ENCODE measurements at regions of chr13 and their contacts with region 1.

Region 1: DNA sequence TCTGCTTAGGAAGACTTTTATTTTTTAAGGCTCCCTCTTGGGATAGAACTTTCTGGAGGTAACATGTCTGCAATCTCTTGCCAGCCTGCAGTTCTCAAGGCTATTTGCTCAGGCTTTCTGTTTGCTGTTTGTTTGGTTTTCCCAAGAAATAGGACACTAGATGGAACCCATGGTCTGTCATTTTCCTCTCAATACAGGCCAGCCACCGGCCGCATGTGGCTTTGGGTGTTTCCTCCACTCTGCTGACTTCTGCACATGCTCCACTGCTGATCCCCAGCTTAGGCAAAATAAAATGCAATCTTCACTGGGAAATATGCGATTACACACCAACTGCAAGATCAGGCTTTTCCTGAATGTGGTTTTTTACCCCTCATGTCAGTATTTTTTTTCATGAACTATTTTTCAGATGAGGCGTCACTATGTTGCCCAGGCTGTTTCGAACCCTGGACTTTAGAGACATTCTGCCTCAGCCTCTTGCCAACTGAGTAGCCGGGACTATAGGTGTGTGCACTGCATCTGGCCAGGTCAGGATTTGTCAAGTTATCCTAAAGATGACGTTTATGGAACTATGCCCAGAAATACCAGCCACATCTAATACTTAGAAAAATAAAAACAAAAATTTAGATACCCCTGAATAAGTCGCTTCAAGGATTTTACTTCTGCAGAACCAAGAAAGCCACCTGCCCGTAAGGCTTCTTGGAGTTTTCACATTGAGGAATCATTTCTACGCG is 94.3 kb upstream of the PABPC3 start:
- DNase-seq: no peak
- ATAC-seq: no peak; the same call in 2 of the 3 replicates
- H3K4me3 ChIP-seq: no peak overlapping the region
- H3K27ac ChIP-seq: no peak overlapping the region
- H3K4me1 ChIP-seq: no peaks in the 10 kb centered on the region
- H3K27me3 ChIP-seq: peaks cover 0 to 8% of the 10 kb centered on the region in 2 experiments; a peak in 1 of 5 replicates
- CTCF ChIP-seq: no peak
- EP300 ChIP-seq: no peak
- POLR2A ChIP-seq: no peak
- RAD21 ChIP-seq: no peak

Region 2: GRCh38 chr13:25037057-25037813 is 35.6 kb after region 1 on chr13:
- CTCF ChIA-PET with region 1: interaction called, 3 read pairs
- POLR2A ChIA-PET with region 1: interaction called, 4 read pairs
- in situ Hi-C with region 1: no loop called
- intact Hi-C with region 1: loop called (anchors 1 kb)
- DNase-seq: peak; percentile 17 to 66 (median 30)
- ATAC-seq: peak; percentile 90
- H3K4me3 ChIP-seq: no peak overlapping the region
- H3K27ac ChIP-seq: no peak overlapping the region
- H3K4me1 ChIP-seq: no peaks in the 10 kb centered on the region
- H3K27me3 ChIP-seq: peaks cover 6 to 30% of the 10 kb centered on the region in 2 experiments; a peak in 4 of 5 replicates
- CTCF ChIP-seq: peak; percentile 65 to 75 (median 70)
- EP300 ChIP-seq: no peak
- POLR2A ChIP-seq: no peak
- RAD21 ChIP-seq: peak; percentile 27 to 72; a peak in 3 of 4 replicates

Region 3: DNA sequence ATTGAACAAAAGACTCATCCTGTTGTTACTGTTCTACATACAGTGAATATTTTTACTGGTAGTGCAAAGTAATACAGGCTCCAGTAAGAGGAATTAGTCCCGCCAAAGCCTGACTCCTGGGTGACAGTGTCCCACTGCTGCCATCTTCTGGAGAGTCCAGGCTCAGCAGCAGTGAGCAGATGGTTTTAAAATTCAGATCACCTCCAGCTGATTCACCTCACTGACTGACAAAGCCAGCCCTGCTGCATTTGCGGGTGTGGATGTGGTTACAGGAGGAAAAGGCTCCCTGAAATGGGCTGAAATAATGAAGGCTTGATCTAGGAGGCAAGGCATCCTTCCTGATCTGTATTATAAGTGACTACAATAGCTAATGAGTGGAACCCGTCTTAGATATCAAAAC is 112.6 kb after region 1 on chr13:
- CTCF ChIA-PET with region 1: interaction called, 20 read pairs
- POLR2A ChIA-PET with region 1: no interaction called
- in situ Hi-C with region 1: loop called (anchors 10 kb)
- intact Hi-C with region 1: loop called (anchors 1 kb)
- DNase-seq: peak; percentile 54 to 74 (median 59)
- ATAC-seq: peak; percentile 96
- H3K4me3 ChIP-seq: no peak overlapping the region
- H3K27ac ChIP-seq: no peak overlapping the region
- H3K4me1 ChIP-seq: no peaks in the 10 kb centered on the region
- H3K27me3 ChIP-seq: peaks cover 2 to 10% of the 10 kb centered on the region in 2 experiments; a peak in 2 of 5 replicates
- CTCF ChIP-seq: peak; percentile 83 to 89 (median 84)
- EP300 ChIP-seq: no peak
- POLR2A ChIP-seq: no peak
- RAD21 ChIP-seq: peak; percentile 55 to 76

Region 4: GRCh38 chr13:25541434-25542123 is 539.9 kb after region 1 on chr13:
- CTCF ChIA-PET with region 1: interaction called, 10 read pairs
- POLR2A ChIA-PET with region 1: no interaction called
- in situ Hi-C with region 1: no loop called
- intact Hi-C with region 1: no loop called
- DNase-seq: peak in 1 of 4 experiments; percentile 1
- ATAC-seq: no peak
- H3K4me3 ChIP-seq: no peak overlapping the region
- H3K27ac ChIP-seq: no peak overlapping the region
- H3K4me1 ChIP-seq: no peaks in the 10 kb centered on the region
- H3K27me3 ChIP-seq: no peaks in the 10 kb centered on the region
- CTCF ChIP-seq: no peak
- EP300 ChIP-seq: no peak
- POLR2A ChIP-seq: no peak
- RAD21 ChIP-seq: no peak

Region 5: DNA sequence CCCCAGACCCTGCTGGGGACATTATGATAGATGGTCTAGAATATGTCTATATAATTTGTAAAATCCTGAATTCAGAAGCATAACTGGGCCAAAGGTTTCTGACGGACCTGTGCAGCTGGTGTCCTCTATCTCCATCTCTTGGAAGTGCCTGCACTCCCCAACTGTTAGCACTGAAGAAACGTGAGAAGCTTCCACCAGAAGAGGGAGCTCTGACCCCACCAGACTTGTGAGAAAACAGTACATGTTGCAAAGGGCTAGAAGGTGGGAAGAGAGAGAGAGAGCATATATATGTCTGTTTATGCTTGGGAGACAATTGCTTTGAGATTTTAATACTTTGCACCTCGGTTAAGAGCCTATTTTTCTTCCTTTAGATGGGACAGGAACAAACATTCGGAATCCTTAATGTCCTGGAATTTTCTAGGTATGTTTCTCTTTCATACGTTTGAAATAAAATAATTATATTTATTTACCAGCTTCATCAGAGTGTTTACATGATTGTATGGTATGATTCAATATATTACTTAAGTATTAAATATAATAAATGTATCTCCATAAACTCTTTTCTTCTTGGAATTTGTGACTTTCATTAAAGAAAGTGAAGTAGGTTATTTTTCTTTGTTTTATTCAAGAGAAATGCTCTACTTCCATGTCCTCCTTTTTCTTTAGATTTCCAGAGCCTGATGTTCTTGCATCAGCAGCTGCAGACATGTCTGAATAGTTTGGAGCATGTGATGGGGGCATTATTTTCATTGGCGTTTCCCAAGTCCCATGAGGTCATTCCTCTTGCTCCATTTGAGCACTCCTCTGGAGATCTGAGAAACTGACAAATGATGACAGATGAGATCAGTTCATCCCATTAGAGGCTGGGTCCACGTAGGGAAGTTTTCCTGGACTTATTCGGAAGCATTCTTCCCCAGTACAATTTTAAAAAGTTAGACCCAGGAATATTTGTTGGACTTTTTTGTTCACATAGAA is 573.1 kb after region 1 on chr13:
- CTCF ChIA-PET with region 1: no interaction called
- POLR2A ChIA-PET with region 1: no interaction called
- in situ Hi-C with region 1: no loop called
- intact Hi-C with region 1: loop called (anchors 10 kb)
- DNase-seq: peak; percentile 47 to 79 (median 54)
- ATAC-seq: peak; percentile 95
- H3K4me3 ChIP-seq: no peak overlapping the region
- H3K27ac ChIP-seq: no peak overlapping the region
- H3K4me1 ChIP-seq: no peaks in the 10 kb centered on the region
- H3K27me3 ChIP-seq: peaks cover 0 to 22% of the 10 kb centered on the region in 2 experiments; a peak in 2 of 5 replicates
- CTCF ChIP-seq: peak; percentile 75 to 93 (median 89)
- EP300 ChIP-seq: no peak
- POLR2A ChIP-seq: no peak
- RAD21 ChIP-seq: peak; percentile 66 to 84

Region 6: GRCh38 chr13:25674371-25674770 is 672.7 kb after region 1 on chr13:
- CTCF ChIA-PET with region 1: no interaction called
- POLR2A ChIA-PET with region 1: no interaction called
- in situ Hi-C with region 1: no loop called
- intact Hi-C with region 1: no loop called
- DNase-seq: no peak
- ATAC-seq: no peak
- H3K4me3 ChIP-seq: no peak overlapping the region
- H3K27ac ChIP-seq: no peak overlapping the region
- H3K4me1 ChIP-seq: no peaks in the 10 kb centered on the region
- H3K27me3 ChIP-seq: no peaks in the 10 kb centered on the region
- CTCF ChIP-seq: no peak
- EP300 ChIP-seq: no peak
- POLR2A ChIP-seq: no peak
- RAD21 ChIP-seq: no peak

Region 7: DNA sequence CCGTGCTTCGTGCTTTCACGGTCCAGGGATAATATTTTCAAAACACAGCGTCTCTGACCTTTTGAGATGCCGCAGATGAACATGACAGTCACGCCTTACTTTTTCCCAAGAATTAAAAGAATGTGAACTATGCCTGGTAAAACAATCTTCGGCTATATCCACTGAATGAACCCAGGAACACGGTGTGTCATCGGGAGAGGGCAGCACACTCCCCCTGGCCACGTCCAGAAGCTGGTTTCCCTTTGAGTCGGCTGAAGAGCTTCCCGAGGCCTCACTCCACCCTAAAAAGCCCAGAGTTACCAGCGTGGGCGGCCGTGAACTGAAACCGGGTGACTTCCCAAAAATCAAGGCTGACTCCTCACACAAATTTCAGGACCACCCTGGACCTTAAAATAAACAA is 1073.1 kb after region 1 on chr13:
- CTCF ChIA-PET with region 1: no interaction called
- POLR2A ChIA-PET with region 1: no interaction called
- in situ Hi-C with region 1: loop called (anchors 5 kb)
- intact Hi-C with region 1: loop called (anchors 5 kb)
- DNase-seq: no peak
- ATAC-seq: no peak
- H3K4me3 ChIP-seq: no peak overlapping the region
- H3K27ac ChIP-seq: no peak overlapping the region
- H3K4me1 ChIP-seq: no peaks in the 10 kb centered on the region
- H3K27me3 ChIP-seq: no peaks in the 10 kb centered on the region; a peak in 1 of 5 replicates
- CTCF ChIP-seq: no peak
- EP300 ChIP-seq: no peak
- POLR2A ChIP-seq: no peak
- RAD21 ChIP-seq: no peak